Psoas muscle (tissue), 8 donors: ENCODE measurements at regions of chr12 and their contacts with region 1.

Region 1: GRCh38 chr12:810671-811415 is 58.5 kb downstream of the WNK1 start:
- DNase-seq: no peak
- ATAC-seq: no peak
- H3K4me3 ChIP-seq: no peak overlapping the region
- H3K27ac ChIP-seq: peak overlapping the region; percentile 12
- H3K4me1 ChIP-seq: peaks cover 36% of the 10 kb centered on the region
- H3K27me3 ChIP-seq: no peaks in the 10 kb centered on the region
- CTCF ChIP-seq: no peak

Region 2: GRCh38 chr12:761256-761655 is 49.6 kb before region 1 on chr12:
- intact Hi-C with region 1: loop called in 1 of 2 experiments (anchors 5 kb)
- DNase-seq: no peak
- ATAC-seq: no peak
- H3K4me3 ChIP-seq: no peak overlapping the region
- H3K27ac ChIP-seq: no peak overlapping the region
- H3K4me1 ChIP-seq: peaks cover 62% of the 10 kb centered on the region
- H3K27me3 ChIP-seq: no peaks in the 10 kb centered on the region
- CTCF ChIP-seq: no peak

Region 3: DNA sequence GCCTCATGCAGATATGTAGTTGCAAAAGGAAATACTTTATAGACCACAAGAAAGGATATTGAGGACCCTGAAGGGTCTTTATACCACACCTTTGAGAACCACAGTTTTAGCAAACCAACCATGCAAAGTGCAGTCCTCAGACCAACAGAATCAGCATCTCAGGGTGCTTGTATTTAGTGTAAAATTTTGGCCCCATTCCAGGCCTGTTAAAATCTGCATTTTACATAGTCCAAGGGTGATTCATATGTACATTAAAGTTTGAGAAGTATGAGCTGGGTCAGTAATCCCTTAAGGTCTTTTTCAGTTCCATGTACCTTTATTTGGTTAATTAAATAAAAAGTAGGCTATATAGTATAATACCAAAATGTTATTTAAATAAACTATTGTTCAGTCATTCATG is 32.8 kb after region 1 on chr12:
- intact Hi-C with region 1: no loop called
- DNase-seq: no peak
- ATAC-seq: no peak
- H3K4me3 ChIP-seq: no peak overlapping the region
- H3K27ac ChIP-seq: no peak overlapping the region
- H3K4me1 ChIP-seq: peaks cover 36% of the 10 kb centered on the region
- H3K27me3 ChIP-seq: no peaks in the 10 kb centered on the region
- CTCF ChIP-seq: no peak

Region 4: GRCh38 chr12:1720494-1720893 is 909.7 kb after region 1 on chr12:
- intact Hi-C with region 1: no loop called
- DNase-seq: no peak
- ATAC-seq: no peak
- H3K4me3 ChIP-seq: no peak overlapping the region
- H3K27ac ChIP-seq: peak overlapping the region; percentile 71
- H3K4me1 ChIP-seq: peaks cover 73% of the 10 kb centered on the region
- H3K27me3 ChIP-seq: no peaks in the 10 kb centered on the region
- CTCF ChIP-seq: no peak